ENCODE measurements at regions of chr2 and their contacts with region 1.

Region 1: GRCh38 chr2:23532391-23533337 is 147.7 kb downstream of the KLHL29 start:
- DNase-seq: peak; percentile 68
- H3K4me3 Mint-ChIP-seq: peak overlapping the region; percentile 95
- H3K27ac Mint-ChIP-seq: peak overlapping the region; percentile 89
- H3K4me1 Mint-ChIP-seq: peaks cover 40% of the 10 kb centered on the region
- H3K27me3 Mint-ChIP-seq: no peaks in the 10 kb centered on the region

Region 2: GRCh38 chr2:23497063-23497462 is 35.6 kb before region 1 on chr2:
- CTCF ChIA-PET with region 1: interaction called, 3 read pairs
- intact Hi-C with region 1: loop called (anchors 2 kb)
- DNase-seq: peak; percentile 83
- H3K4me3 Mint-ChIP-seq: no peak overlapping the region
- H3K27ac Mint-ChIP-seq: no peak overlapping the region
- H3K4me1 Mint-ChIP-seq: peaks cover 21% of the 10 kb centered on the region
- H3K27me3 Mint-ChIP-seq: no peaks in the 10 kb centered on the region

Region 3: DNA sequence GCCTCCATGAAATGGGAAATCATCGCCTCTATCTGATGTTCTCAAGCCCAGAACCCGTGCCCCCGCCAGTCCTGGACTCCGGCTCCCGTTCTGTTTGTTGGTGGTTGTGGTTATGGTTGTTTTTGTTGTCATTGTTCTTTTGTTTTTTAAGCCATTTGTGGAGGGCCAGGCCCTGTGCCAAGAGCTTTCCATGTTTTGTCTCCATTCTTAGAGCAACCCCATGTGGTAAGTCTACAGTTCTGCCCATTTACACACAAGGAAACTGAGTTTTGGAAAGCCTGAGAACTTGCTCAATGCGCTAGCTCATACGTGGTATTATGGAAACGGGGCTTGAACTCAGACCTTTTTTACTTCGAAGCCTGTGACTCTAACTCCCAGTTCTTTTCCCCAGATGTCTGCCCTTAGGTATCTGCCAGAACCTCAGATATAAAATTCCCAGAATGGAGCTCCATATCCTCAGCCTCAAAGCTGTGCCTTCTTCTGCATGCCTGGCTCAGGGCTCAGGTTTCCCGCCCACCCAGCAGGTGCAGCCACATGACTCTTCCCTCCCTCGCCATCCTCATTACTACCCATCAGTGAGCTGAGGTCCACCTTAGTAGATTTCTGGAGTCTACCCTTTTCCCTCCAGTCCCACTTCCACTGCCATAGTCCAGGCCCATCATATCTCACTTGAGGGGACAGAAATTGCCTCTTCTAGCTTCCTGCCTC is 46.5 kb after region 1 on chr2:
- CTCF ChIA-PET with region 1: no interaction called
- intact Hi-C with region 1: no loop called
- DNase-seq: no peak
- H3K4me3 Mint-ChIP-seq: no peak overlapping the region
- H3K27ac Mint-ChIP-seq: no peak overlapping the region
- H3K4me1 Mint-ChIP-seq: no peaks in the 10 kb centered on the region
- H3K27me3 Mint-ChIP-seq: no peaks in the 10 kb centered on the region

Measured in activated naive CD4-positive, alpha-beta T cell treated with anti-CD3 and anti-CD28 coated beads for 36 hours (primary cell).